ENCODE measurements at regions of chr1 and their contacts with region 1.

Region 1: DNA sequence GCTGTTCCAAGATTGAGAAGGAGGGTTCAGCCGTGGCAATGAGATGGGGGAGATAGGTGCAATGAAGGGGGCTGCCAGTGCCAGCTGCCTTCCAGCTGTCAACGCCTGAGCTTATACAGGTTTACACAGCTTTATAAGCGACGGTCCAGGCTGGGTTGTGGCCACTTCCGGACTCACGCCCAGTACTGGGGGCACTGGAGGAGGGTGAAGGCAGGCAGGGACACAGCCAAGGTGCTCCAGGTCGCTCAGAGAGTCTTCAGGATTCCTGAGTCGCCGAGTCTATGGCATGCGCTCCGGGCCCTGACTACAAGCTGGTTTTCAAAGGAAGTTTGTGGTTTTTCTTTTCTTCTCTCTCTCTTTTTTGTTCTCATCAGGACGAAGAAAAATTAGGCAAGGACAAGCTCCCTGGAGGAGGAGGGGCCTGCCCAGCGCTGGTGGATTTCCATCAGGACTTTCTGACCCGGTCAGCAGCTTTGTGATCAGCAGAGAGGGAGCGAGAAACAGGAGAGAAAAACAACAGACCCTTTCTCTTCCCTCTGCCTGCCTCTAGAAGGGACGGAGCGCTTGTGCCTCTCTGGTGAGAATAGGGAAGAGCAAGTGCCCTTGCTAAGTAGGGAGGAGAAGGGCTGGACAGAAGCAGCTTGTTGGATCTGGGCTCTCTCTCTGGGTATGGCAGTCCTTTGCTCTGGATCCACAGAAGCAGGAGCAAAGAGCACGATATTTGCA is at the start of gene MINDY1:
- DNase-seq: peak; percentile 32
- ATAC-seq: peak; percentile 71
- H3K4me3 ChIP-seq: peak within 1 kb of the TSS; percentile 73
- H3K27ac ChIP-seq: peak within 1 kb of the TSS; percentile 73
- H3K4me1 ChIP-seq: peaks cover 12% of the 10 kb centered on the region
- H3K27me3 ChIP-seq: no peaks in the 10 kb centered on the region
- CTCF ChIP-seq: peak; percentile 38 to 57 (median 43); a peak in 4 of 6 replicates
- EP300 ChIP-seq: no peak
- POLR2A ChIP-seq: peak; percentile 60
- RAD21 ChIP-seq: peak; percentile 39; the same call in 1 of the 2 replicates
- polyA plus RNA-seq, gene MINDY1: 0.48 to 0.49 TPM

Region 2: DNA sequence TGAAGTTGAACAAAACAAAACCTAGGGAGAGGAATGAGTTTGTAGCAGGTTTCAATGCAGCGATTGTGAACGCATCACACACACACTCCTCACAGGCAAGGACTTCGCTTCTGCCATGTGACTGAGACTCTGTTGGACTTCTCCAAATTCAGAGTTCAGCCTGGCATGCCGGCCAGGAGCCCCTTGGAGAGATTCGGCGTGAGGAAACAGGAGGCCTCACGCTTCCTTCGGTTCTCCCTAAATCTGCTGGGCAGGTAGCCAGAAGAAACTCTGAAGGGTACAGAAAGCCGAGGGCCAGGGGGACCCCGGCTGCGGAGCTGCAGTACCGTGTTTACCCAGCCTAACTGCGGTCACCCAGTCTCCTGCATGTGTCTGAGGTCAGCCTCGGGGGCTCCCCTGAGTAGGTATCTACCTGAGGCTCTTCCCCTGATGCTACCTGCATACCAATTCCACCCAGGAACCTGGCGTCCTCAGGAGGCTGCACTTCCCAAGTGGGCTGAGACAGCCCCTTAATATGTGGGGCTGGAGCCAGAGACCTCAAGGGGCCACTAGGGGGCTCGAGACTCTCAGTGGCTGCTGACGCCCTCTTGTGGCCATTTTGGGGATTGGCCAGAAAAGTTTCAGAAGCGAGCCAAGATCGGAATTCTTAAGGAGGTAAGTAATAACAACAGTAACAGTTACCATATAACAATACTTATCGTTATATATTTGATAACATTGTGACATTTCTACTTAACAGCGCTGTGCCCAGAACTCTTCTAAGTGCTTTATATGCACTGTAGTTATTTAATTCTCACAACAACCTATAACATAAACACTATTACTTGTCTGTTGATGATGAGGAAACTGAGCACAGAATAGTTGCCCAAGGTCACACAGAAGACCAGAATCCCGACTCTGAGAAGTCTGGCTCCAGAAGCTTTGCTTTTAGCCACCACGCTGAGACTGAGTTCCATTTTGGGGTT is 27.1 kb before region 1 on chr1:
- CTCF ChIA-PET with region 1: interaction called, 252 read pairs
- POLR2A ChIA-PET with region 1: interaction called, 3 read pairs
- RAD21 ChIA-PET with region 1: interaction called, 7 read pairs
- SMC1A ChIA-PET with region 1: interaction called, 3 read pairs
- in situ Hi-C with region 1: no loop called
- intact Hi-C with region 1: no loop called
- DNase-seq: peak; percentile 40
- ATAC-seq: peak; percentile 78
- H3K4me3 ChIP-seq: no peak overlapping the region
- H3K27ac ChIP-seq: no peak overlapping the region
- H3K4me1 ChIP-seq: no peaks in the 10 kb centered on the region
- H3K27me3 ChIP-seq: no peaks in the 10 kb centered on the region; a peak in 2 of 4 replicates
- CTCF ChIP-seq: peak; percentile 100; a peak in 5 of 6 replicates
- EP300 ChIP-seq: no peak
- POLR2A ChIP-seq: no peak
- RAD21 ChIP-seq: peak; percentile 79

Measured in GM12878 (cell line).